ENCODE measurements at regions of chr15 and their contacts with region 1.

Region 1: DNA sequence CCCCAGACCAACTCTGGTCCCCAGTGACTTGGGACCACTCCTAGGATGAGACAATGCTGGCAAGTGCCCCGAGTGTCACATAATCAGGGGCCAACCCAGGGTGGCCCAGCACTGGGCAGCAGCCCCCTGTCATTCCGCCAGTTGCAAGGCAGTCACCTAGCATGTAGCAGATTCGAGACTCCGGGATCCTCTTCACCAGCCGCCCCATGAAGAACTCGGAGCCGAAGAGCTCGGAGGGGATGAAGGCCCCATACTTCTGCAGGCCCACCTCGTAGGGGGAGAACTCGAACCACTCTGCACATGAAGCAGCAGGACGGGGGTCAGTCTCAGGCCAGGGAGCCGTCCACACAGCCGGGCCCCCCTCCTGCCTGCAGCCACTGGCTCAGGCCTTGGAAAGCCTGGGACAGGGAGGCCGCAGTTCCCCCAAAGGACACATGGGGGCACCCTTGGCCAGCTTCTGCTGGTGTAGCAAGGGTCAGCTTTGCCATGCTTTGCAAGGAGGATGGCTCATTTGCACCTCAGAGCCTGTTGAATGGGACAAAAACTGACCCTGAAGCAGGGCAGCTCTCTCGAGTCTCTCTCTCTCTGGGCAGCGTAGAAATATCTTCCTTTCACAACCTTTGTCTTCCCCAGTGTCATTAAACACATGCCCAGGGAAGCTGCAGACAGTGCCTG is 17.0 kb upstream of the EHD4 start:
- DNase-seq: peak; percentile 89
- ATAC-seq: peak; percentile 95

Region 2: GRCh38 chr15:42056934-42057779 is 67.8 kb after region 1 on chr15:
- intact Hi-C with region 1: loop called (anchors 2 kb)
- DNase-seq: peak; percentile 85
- ATAC-seq: peak; percentile 92

Region 3: DNA sequence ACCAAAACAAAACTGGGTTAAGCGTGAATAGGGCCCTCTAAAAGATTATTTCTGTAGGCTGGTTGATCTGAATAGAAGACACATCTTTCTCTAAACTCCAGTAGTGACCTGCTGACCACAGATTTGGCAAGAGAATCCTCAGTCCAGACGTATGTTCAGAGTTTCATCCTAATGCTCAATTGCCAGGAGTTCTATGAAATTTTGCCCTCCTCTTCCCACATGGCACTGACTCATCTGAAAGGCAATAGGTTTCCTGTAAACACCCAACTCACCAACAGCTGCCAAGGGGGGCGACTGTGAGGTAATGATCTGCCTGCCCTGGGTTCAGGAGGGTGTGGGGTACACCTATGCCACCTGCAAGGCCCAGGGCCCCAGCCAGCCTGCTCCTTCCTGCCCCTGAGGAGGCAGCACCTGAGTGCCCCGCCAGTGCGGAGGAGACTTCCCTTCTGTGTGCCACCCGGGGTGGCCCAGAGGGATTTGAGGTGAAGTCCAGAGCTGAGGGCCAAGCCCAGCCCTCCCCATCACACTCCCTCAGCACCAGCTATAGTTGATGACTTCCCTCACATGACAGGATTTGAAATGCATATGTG is 113.3 kb after region 1 on chr15:
- intact Hi-C with region 1: no loop called
- DNase-seq: no peak
- ATAC-seq: no peak

Region 4: GRCh38 chr15:42137431-42138261 is 148.2 kb after region 1 on chr15:
- intact Hi-C with region 1: loop called (anchors 5 kb)
- DNase-seq: no peak
- ATAC-seq: peak; percentile 51